ENCODE measurements at regions of chr13 and their contacts with region 1.

Region 1: DNA sequence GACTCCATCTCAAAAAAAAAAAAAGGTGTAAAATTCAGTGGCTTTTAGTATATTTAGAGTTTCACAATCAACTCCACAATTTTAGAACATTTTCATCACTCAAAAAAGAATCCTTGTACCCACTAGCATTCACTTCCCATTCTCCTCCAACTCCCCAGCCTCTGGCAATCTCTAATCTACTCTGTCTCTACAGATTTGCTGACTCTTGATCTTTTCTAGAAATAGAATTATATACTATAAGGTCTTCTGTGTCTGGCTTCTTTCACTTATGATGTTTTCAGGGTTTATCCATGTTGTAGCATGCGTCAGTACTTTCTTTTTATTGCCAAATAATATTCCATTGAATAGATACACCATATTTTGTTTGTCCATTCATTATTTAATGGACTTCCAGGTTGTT is 8.0 kb upstream of the FARP1 start:
- DNase-seq: no peak
- H3K4me3 ChIP-seq: no peak overlapping the region
- CTCF ChIP-seq: no peak

Region 2: DNA sequence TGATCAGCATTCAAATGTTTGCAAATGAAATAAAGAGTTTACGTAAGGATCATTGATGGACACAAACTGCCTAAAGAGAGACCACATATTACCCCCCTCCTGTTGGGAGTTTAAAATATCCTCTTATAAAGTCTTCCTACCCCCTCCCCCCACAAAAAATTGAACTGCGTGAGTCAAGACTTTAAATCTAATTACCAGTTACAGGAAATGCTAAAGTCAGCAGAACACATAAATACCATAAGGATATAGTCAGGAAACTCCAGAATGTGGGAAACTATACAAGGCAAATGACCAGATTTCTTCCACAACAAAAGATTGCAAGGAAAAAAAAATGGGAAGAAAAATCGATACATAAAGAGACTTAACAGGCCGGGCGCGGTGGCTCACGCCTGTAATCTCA is 36.4 kb before region 1 on chr13:
- in situ Hi-C with region 1: loop called (anchors 5 kb)
- DNase-seq: no peak
- H3K4me3 ChIP-seq: no peak overlapping the region
- CTCF ChIP-seq: no peak